ENCODE measurements at regions of chr15 and their contacts with region 1.

Region 1: DNA sequence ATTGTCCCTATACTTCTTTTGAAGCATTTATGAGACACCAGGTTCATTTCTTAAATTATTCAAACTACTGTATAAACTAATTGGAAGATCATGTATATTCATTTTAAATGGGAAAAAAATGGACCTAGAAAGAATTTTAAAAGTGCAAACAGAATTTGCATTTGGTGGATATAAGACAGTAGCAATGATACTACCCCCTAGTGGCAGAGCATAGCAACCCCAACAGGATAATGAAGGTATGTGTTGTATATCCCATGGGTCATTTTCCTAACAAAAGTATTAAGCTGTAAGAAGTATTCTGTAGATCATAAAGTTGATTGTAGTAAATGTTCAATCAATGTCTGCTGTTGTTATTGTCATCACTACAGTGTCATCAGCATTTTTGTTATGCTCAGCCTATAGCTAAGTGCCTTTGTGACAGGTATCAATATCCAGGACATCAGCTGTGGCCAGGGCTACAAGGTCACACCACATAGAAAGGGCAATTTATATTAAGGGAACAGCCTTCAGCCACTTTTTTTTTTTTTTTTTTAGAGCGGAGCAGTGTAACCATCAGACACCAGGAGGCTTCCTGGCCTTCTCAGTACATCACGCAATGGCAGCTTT is 175.8 kb downstream of the FOXB1 start:
- DNase-seq: no peak
- ATAC-seq: no peak

Region 2: GRCh38 chr15:59725172-59725486 is 454.8 kb before region 1 on chr15:
- intact Hi-C with region 1: loop called in 1 of 2 experiments (anchors 10 kb)
- DNase-seq: no peak
- ATAC-seq: no peak

Region 3: GRCh38 chr15:60110909-60111308 is 69.0 kb before region 1 on chr15:
- intact Hi-C with region 1: no loop called
- DNase-seq: no peak
- ATAC-seq: no peak

Region 4: DNA sequence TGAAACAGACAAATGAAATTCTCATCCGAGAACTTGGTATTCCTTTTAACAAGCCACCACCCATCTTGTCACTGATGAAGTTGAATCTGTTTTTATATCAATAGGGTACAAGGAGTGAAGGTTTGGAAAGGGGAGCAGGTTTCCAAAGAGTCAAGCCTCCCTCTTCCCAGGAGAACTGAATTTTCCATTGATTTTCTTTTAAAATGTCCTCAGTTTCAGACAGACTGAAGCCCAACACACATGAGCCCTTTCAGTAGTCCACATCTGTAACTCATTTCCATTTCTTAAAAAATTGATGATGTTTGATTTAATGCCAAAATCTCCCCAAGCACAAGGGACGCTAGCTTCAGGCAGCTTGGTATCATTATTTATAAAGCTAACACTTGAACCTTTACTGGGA is 11.9 kb after region 1 on chr15:
- intact Hi-C with region 1: no loop called
- DNase-seq: no peak
- ATAC-seq: no peak

Region 5: GRCh38 chr15:60351066-60351465 is 171.2 kb after region 1 on chr15:
- intact Hi-C with region 1: no loop called
- DNase-seq: no peak
- ATAC-seq: peak in 1 of 2 donors; percentile 7